ENCODE measurements at regions of chr2 and their contacts with region 1.

Region 1: GRCh38 chr2:54899576-54900200 is 150.6 kb downstream of the RTN4 start:
- DNase-seq: peak; percentile 23
- CTCF ChIP-seq: peak; percentile 63

Region 2: DNA sequence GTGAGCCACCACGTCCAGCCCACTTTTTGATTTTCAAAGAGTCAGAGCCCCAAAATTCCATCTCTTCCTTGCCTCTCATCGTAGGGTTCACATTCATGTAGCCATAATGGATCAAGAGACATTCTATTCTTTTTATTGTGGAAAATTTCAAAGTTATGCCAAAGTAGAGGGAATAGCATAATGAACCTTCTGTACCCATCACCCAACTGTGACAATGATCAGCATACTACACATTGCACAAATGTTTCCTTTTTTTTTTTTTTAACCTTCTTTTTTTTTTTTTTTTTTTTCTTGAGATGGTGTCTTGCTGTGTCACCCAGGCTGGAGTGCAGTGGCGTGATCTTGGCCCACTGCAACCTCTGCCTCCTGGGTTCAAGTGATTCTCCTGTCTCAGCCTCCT is 13.8 kb before region 1 on chr2:
- CTCF ChIA-PET with region 1: interaction called, 10 read pairs
- POLR2A ChIA-PET with region 1: no interaction called
- DNase-seq: no peak
- CTCF ChIP-seq: no peak

Region 3: GRCh38 chr2:54958717-54959371 is 59.2 kb after region 1 on chr2:
- CTCF ChIA-PET with region 1: interaction called, 10 read pairs
- POLR2A ChIA-PET with region 1: no interaction called
- DNase-seq: peak; percentile 6
- CTCF ChIP-seq: no peak

Region 4: GRCh38 chr2:55014962-55015939 is 115.6 kb after region 1 on chr2:
- CTCF ChIA-PET with region 1: interaction called, 25 read pairs
- POLR2A ChIA-PET with region 1: no interaction called
- DNase-seq: no peak
- CTCF ChIP-seq: peak; percentile 66

Region 5: DNA sequence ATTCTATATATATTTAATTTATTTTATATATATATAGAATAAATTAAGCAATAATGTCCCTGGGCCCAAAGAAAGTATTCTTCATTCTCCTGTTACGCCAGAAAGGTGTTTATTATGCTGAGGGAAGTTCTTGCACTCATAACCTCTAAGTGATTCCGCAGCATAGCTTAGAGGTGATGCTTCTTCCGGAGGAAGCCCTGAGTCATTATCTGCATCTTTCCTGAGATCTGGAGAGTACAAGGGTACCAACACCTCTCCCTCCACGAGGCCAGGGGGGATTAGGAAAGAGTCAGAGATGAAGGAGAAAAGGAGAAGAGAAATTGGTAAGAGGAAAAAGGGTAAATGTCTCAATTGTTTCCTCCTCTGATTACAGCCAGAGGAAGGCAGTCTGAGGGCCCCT is 193.7 kb after region 1 on chr2:
- CTCF ChIA-PET with region 1: no interaction called
- POLR2A ChIA-PET with region 1: no interaction called
- DNase-seq: no peak
- CTCF ChIP-seq: no peak

Region 6: DNA sequence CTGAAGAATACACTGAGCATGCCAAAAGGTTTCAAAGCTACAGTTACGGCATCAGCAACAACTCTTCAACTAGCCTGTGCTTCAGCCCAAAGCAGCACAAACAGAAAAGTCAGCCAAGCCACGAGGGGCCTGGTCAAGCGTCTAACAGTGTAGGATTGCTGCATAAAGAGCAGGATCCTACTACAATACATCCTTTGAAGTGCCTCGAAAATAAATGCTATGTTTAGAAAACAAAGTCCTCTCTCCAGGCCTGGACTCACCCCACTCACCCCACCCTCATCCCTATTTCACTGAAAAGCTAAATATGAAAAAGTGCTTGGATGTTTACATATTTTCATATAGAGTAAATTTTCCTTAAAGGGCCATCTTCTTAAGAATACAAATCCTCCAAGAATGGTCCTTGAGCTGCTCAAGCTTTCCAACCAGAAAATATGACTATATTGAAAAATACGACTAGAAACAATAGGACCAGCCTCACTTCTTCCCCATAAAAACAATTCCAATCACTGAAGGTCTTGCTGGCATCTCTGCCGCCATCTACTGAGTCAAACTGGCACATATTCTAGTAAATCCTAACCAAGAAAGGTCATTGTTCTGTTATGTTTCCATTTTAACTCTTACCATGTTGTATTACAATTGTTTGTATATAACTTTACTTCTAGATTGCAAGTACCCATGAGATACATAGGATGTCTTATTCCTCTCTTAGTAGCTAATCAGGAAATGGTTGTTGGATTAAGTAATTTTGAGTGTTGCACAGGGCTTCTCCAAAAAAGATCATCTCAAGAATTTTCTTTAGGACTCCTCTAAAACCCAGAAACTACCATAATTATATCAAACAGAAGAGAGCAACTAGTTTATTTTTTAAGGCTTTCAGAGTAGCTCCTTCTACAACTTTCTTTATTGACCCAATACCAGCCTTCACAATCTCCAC is 268.8 kb after region 1 on chr2:
- CTCF ChIA-PET with region 1: interaction called, 45 read pairs
- POLR2A ChIA-PET with region 1: no interaction called
- DNase-seq: peak; percentile 42
- CTCF ChIP-seq: peak; percentile 49

Region 7: DNA sequence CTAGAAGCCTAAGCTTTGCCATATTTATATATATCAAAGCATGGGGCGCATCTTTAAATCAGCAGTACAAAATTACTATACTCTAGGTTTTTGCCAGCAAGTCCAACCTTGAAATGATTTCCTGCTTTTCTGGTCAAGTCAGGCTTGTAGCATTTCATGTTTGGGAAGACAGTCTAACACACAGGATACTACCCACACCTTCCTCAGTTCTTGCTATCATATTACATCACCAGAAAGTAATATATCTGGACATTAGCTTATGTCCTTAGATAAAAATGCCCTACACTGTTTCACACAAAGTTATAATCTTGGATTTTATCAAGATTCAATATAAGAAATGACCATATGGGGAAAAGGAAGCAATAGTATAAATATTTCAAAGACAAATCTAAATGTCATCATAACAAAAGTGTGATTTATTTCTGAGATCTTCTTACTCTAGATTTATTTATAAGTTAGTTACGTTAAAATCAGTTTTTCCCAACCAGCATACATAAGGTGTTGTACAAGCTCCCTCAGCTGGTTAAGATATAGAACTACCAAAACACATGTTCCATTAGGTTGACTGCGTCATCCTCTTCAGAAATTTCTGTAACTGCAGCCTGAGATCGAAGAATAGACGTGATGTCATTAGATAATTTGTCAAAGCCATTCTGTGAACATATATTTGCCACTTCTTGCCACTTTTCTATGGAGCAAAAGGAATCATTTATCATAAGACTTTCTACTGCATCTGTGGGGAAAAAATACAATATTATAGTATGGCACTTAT is 275.8 kb after region 1 on chr2:
- CTCF ChIA-PET with region 1: interaction called, 45 read pairs
- POLR2A ChIA-PET with region 1: no interaction called
- DNase-seq: peak; percentile 58
- CTCF ChIP-seq: peak; percentile 52

Measured in GM10248 (cell line).